ENCODE measurements at regions of chr7 and their contacts with region 1.

Region 1: GRCh38 chr7:157336383-157337315 is at the start of gene DNAJB6:
- DNase-seq: peak; percentile 78 to 98
- H3K4me3 ChIP-seq: peak within 1 kb of the TSS; percentile 92 to 99 (median 94)
- H3K27ac ChIP-seq: peak within 1 kb of the TSS; percentile 91
- H3K4me1 ChIP-seq: peaks cover 2 to 11% (median 6%) of the 10 kb centered on the region in 4 experiments
- H3K27me3 ChIP-seq: no peaks in the 10 kb centered on the region
- CTCF ChIP-seq: no peak
- EP300 ChIP-seq: peak in 1 of 2 experiments; percentile 68; a peak in 1 of 3 replicates
- POLR2A ChIP-seq: peak; percentile 61 to 86
- RAD21 ChIP-seq: no peak
- total RNA-seq, gene DNAJB6: 270 and 295 TPM in 2 replicates

Region 2: GRCh38 chr7:157193274-157193673 is 143.4 kb before region 1 on chr7:
- CTCF ChIA-PET with region 1: no interaction called
- POLR2A ChIA-PET with region 1: no interaction called
- DNase-seq: no peak
- H3K4me3 ChIP-seq: no peak overlapping the region
- H3K27ac ChIP-seq: no peak overlapping the region
- H3K4me1 ChIP-seq: no peaks in the 10 kb centered on the region
- H3K27me3 ChIP-seq: no peaks in the 10 kb centered on the region
- CTCF ChIP-seq: no peak
- EP300 ChIP-seq: no peak
- POLR2A ChIP-seq: no peak
- RAD21 ChIP-seq: no peak

Region 3: DNA sequence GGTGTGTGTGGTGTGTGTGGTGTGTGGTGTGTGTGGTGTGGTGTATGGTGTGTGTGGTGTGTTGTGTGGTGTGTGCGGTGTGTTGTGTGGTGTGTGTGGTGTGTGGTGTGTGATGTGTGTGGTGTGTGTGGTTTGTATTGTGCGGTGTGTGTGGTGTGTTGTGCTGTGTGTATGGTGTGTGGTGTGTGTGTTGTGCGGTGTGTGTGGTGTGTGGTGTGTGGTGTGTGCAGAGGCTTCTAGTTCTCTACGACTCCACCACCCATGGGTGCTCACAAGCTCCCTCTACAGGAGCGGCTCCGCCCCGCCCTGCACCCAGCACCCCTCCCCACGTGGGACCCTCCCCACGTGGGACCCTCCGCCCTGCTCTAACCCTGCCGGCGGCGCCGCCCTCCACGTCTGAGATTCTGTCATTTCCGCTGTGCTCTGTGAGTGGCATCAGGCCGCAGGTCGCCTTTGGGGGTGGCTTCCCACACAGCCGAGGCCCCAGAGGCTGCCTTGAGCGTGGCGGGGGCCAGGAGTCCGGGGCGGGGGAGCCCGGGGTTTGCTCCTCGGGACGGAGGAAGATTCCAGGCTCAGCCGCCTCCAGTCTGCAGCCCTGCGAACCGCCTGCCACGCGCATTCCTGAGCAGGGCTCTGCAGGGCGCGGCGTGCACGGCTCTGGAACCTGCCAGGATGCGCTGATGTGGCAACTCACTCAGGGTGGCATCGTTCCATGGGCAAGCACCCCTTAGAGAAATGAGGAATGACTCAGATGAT is 36.9 kb before region 1 on chr7:
- CTCF ChIA-PET with region 1: interaction called, 7 read pairs
- POLR2A ChIA-PET with region 1: interaction called, 34 read pairs
- DNase-seq: no peak
- H3K4me3 ChIP-seq: no peak overlapping the region
- H3K27ac ChIP-seq: no peak overlapping the region
- H3K4me1 ChIP-seq: peaks cover 0 to 2% (median under 1%) of the 10 kb centered on the region in 4 experiments; a peak in 5 of 7 replicates
- H3K27me3 ChIP-seq: peaks cover 0 to 7% (median 0%) of the 10 kb centered on the region in 4 experiments; a peak in 1 of 7 replicates
- CTCF ChIP-seq: peak in 1 of 3 experiments; percentile 37; a peak in 1 of 4 replicates
- EP300 ChIP-seq: no peak
- POLR2A ChIP-seq: no peak
- RAD21 ChIP-seq: no peak

Region 4: DNA sequence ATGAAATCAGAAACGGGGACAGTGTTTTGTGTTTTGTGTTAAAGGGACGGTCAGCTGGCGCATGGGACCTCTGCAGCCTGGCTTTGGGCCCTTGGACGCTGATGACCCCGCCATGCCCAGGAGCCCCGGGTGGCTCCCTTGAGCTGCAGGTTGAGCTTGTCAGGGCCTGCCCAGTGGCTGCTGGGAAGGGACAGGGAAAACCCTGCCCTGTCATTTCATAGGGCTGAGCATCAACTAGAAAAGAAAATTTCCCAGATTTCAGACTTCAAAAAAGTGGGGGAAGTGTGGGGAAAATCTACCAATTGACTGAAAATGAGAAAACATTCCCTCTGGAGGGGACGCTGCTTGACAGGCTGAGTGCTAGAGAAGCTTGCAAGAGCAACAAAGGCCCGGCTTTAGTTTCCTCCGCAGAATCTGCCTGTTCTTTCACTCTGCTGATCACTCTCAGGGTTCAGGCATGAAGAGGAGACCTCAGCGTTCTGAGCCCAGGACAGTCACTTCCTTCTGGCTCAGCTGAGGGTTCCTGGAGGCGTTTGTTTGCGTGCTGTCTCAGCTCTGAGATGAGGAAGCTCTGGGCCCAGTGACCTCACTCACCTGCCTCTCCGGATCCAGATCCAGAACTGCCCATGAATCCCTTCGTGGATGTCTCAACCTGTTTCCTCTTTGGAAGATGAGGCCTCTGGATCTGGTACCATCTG is 18.5 kb before region 1 on chr7:
- CTCF ChIA-PET with region 1: interaction called, 18 read pairs
- POLR2A ChIA-PET with region 1: interaction called, 62 read pairs
- DNase-seq: no peak
- H3K4me3 ChIP-seq: no peak overlapping the region
- H3K27ac ChIP-seq: peak overlapping the region; percentile 48; the same call in 1 of the 2 replicates
- H3K4me1 ChIP-seq: peaks cover 0 to 9% (median 3%) of the 10 kb centered on the region in 4 experiments; a peak in 6 of 7 replicates
- H3K27me3 ChIP-seq: no peaks in the 10 kb centered on the region
- CTCF ChIP-seq: no peak
- EP300 ChIP-seq: no peak
- POLR2A ChIP-seq: no peak
- RAD21 ChIP-seq: no peak

Region 5: DNA sequence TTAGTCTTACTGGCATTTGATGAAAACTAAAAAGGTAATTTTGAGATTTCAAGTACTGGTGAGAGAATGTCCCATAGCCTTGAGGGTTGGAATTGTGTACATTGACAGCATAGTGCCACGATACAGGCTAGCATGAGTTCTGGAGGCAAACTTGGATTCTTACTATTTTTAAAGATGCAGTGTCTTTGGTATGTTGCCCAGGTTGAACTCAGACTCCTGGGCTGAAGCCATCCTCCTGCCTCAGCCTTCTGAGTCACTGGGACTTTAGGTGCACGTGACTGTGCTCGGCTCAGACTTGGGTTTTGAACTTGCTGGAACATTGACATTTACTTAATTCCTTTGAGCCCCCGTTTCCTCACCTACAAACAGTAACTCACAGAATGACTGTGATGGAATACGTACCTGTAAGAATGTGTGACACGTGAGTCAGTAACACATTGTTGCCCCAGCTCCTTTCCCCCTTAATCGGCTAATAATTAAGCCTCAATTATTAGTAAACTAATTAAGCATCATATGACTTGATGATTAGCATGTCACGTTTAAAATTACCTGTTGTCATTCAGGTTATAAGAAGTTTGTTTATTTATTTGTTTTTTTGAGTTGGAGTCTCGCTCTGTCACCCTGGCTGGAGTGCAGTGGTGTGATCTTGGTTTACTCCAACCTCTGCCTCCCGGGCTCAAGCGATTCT is 10.7 kb after region 1 on chr7:
- CTCF ChIA-PET with region 1: interaction called, 23 read pairs
- POLR2A ChIA-PET with region 1: interaction called, 36 read pairs
- DNase-seq: no peak
- H3K4me3 ChIP-seq: no peak overlapping the region
- H3K27ac ChIP-seq: no peak overlapping the region
- H3K4me1 ChIP-seq: peaks cover 2 to 27% (median 7%) of the 10 kb centered on the region in 4 experiments; a peak in 5 of 7 replicates
- H3K27me3 ChIP-seq: no peaks in the 10 kb centered on the region
- CTCF ChIP-seq: no peak
- EP300 ChIP-seq: no peak
- POLR2A ChIP-seq: no peak
- RAD21 ChIP-seq: no peak

Region 6: GRCh38 chr7:157412021-157412443 is 75.4 kb after region 1 on chr7:
- CTCF ChIA-PET with region 1: no interaction called
- POLR2A ChIA-PET with region 1: no interaction called
- DNase-seq: no peak
- H3K4me3 ChIP-seq: no peak overlapping the region
- H3K27ac ChIP-seq: no peak overlapping the region
- H3K4me1 ChIP-seq: peaks cover 5 to 16% (median 10%) of the 10 kb centered on the region in 4 experiments
- H3K27me3 ChIP-seq: no peaks in the 10 kb centered on the region
- CTCF ChIP-seq: no peak
- EP300 ChIP-seq: no peak
- POLR2A ChIP-seq: no peak
- RAD21 ChIP-seq: no peak

Measured in H1 (cell line).